Activated CD4-positive, alpha-beta memory T cell treated with anti-CD3 and anti-CD28 coated beads for 36 hours (primary cell): ENCODE measurements at regions of chr11 and their contacts with region 1.

Region 1: GRCh38 chr11:62841361-62842184 is 2.2 kb upstream of the WDR74 start:
- DNase-seq: peak; percentile 88
- H3K4me3 Mint-ChIP-seq: no peak overlapping the region
- H3K27ac Mint-ChIP-seq: no peak overlapping the region
- H3K4me1 Mint-ChIP-seq: peaks cover 17% of the 10 kb centered on the region
- H3K27me3 Mint-ChIP-seq: no peaks in the 10 kb centered on the region

Region 2: GRCh38 chr11:62612366-62613290 is 228.9 kb before region 1 on chr11 and contains the starts of genes EML3 and ROM1:
- CTCF ChIA-PET with region 1: no interaction called
- POLR2A ChIA-PET with region 1: no interaction called
- intact Hi-C with region 1: loop called (anchors 5 kb)
- DNase-seq: peak; percentile 90
- H3K4me3 Mint-ChIP-seq: peak within 1 kb of the TSS; percentile 90
- H3K27ac Mint-ChIP-seq: peak within 1 kb of the TSS; percentile 95
- H3K4me1 Mint-ChIP-seq: peaks cover 45% of the 10 kb centered on the region
- H3K27me3 Mint-ChIP-seq: no peaks in the 10 kb centered on the region
- total RNA-seq, gene EML3: 113 to 116 TPM
- total RNA-seq, gene ROM1: 1.1 to 1.5 TPM

Region 3: DNA sequence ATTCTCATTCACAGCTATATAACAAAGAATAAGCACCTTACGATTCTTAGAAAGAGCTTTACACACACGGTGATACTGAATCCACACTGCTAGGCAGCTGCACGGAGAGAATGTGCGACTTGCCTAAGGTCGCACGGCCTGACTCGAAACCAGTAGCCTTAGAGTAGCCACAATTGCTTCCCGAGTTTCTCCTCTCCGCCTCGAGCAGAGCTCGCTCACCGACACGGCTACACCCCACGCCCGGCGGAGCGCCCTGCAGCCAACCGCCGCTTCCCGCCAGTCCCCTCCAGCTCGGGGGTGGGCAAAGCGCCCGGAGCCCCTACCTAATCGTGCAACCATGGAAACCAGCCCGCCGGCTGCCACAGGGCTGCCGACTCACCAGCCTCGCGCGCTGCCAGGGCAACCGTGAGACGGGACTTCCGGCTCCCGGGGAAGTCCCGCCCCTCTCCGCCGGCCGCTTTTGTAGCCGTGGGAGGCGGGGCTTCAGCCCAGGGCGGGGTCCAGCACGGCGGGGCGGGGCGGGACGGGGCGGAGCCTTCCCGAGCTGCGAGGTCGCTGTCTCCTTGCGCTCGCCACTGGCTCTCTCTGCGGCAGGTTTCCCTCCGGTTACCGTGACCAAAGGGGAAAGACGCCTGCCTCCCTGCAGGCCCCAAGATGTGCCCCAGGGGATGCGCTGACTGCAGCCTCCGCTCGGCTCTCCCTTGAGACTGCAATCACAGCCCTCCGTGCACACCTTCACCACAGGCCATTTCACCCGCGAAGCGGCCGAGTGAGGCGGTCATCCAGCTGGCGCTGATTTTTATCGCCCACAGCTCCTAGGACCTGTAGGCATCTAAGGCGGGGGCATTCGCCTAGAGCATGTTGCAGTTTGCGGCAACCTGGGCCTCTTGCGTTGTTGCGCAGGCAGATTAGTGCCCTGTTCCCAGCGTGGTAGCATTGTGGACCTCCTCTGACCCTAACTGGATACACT is 135.4 kb before region 1 on chr11:
- CTCF ChIA-PET with region 1: no interaction called
- POLR2A ChIA-PET with region 1: interaction called, 29 read pairs
- intact Hi-C with region 1: loop called (anchors 1 kb)
- DNase-seq: peak; percentile 96
- H3K4me3 Mint-ChIP-seq: peak overlapping the region; percentile 85
- H3K27ac Mint-ChIP-seq: peak overlapping the region; percentile 70
- H3K4me1 Mint-ChIP-seq: peaks cover 50% of the 10 kb centered on the region
- H3K27me3 Mint-ChIP-seq: no peaks in the 10 kb centered on the region

Region 4: GRCh38 chr11:62753736-62754603 is 87.6 kb before region 1 on chr11 and contains the start of gene ZBTB3:
- CTCF ChIA-PET with region 1: no interaction called
- POLR2A ChIA-PET with region 1: interaction called, 15 read pairs
- intact Hi-C with region 1: no loop called
- DNase-seq: peak; percentile 98
- H3K4me3 Mint-ChIP-seq: peak within 1 kb of the TSS; percentile 99
- H3K27ac Mint-ChIP-seq: peak within 1 kb of the TSS; percentile 99
- H3K4me1 Mint-ChIP-seq: peaks cover 23% of the 10 kb centered on the region
- H3K27me3 Mint-ChIP-seq: no peaks in the 10 kb centered on the region
- total RNA-seq, gene ZBTB3: 8.4 to 9.7 TPM

Region 5: DNA sequence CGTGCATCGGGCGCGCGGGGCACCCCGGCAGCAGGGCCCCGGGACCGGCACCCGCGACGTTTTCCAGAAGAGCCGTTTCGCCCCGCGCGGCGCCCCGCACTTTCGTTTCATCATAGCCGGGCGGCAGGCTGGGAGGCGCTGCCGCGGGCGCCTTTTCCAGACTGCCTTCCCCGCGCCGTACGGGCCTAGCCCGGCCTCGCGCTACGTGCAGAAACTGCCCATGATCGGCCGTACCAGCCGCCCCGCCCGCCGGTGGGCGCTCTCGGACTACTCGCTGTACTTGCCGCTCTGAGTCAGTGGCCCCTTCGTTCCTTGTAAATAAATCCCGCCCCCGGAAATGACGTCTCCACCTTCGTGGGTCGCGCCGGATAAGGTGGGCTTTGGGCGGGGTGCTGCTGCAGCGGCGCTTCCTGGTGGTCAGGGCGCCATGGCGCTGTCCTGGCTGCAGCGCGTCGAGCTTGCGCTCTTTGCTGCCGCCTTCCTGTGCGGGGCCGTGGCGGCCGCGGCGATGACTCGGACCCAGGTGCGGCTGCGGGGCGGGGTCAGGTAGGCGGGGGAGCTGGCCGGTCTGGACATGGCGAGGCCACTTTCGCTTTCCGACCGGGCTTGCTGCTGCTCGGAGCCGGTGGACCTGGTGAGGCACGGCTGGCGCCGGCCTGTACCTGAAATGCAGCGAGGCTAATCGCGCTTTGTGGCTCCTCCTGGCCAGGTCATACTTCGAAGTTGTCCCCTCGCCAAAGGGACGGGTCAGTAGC is 54.4 kb before region 1 on chr11 and contains the start of gene TMEM179B:
- CTCF ChIA-PET with region 1: interaction called, 32 read pairs
- POLR2A ChIA-PET with region 1: interaction called, 96 read pairs
- intact Hi-C with region 1: loop called (anchors 1 kb)
- DNase-seq: peak; percentile 98
- H3K4me3 Mint-ChIP-seq: peak within 1 kb of the TSS; percentile 95
- H3K27ac Mint-ChIP-seq: peak within 1 kb of the TSS; percentile 93
- H3K4me1 Mint-ChIP-seq: peaks cover 39% of the 10 kb centered on the region
- H3K27me3 Mint-ChIP-seq: no peaks in the 10 kb centered on the region
- total RNA-seq, gene TMEM179B: 25.0 to 25.5 TPM

Region 6: DNA sequence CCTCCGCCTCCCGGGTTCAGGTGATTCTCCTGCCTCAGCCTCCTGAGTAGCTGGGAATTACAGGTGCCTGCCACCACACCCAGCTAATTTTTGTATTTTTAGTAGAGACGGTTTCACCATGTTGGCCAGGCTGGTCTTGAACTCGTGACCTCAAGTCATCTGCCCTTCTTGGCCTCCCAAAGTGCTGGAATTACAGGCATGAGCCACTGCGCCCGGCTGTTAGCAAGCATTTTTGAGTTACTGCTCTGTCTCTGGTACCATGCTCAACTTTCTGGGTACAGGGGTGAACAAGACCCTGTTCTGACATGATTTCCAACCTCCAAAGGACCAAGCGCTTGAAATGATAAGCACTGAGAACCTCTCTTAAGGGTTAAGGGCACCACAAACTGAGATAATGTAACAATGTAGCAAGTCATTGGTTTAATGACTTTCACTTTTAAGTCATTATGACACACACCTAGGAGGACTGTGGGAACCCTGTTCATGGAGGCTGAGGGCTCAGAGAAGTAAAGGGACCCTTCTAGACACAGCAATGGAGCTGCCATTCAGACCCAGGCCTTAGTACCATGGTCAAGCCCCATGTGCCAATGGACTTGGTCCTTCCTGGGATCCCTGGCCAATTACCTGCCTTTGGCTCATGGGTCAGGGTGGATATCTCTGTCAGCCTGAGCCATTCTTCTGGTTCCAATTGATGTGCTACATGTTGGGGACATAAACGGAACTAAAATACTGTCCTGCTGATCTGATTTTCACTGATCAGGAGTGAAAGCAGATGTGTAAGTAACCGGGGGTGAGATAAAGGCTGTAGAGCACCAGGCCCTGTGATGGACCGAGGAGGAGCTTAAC is 50.7 kb after region 1 on chr11:
- CTCF ChIA-PET with region 1: no interaction called
- POLR2A ChIA-PET with region 1: no interaction called
- intact Hi-C with region 1: no loop called
- DNase-seq: no peak
- H3K4me3 Mint-ChIP-seq: no peak overlapping the region
- H3K27ac Mint-ChIP-seq: no peak overlapping the region
- H3K4me1 Mint-ChIP-seq: peaks cover 2% of the 10 kb centered on the region
- H3K27me3 Mint-ChIP-seq: peaks cover 4% of the 10 kb centered on the region

Region 7: GRCh38 chr11:62909107-62909894 is 67.7 kb after region 1 on chr11:
- CTCF ChIA-PET with region 1: no interaction called
- POLR2A ChIA-PET with region 1: no interaction called
- intact Hi-C with region 1: no loop called
- DNase-seq: peak; percentile 31
- H3K4me3 Mint-ChIP-seq: no peak overlapping the region
- H3K27ac Mint-ChIP-seq: no peak overlapping the region
- H3K4me1 Mint-ChIP-seq: peaks cover 5% of the 10 kb centered on the region
- H3K27me3 Mint-ChIP-seq: peaks cover 8% of the 10 kb centered on the region

Region 8: DNA sequence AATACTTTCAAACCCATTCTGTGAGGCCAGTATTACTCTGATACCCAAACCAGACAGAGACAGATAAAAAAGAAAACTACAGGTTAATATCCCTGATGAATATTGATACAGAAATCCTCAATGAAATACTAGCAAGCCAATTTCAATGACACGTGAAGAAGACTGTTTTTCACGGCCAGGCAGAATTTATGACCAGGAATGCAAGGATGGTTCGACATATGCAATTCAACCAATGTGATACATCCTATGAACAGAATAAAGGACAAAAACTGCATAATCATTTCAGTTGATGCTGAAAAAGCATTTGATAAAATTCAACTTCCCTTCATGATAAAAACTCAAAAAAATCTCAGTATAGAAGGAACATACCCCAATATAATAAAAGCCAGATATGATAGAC is 258.0 kb after region 1 on chr11:
- CTCF ChIA-PET with region 1: no interaction called
- POLR2A ChIA-PET with region 1: no interaction called
- intact Hi-C with region 1: no loop called
- DNase-seq: no peak
- H3K4me3 Mint-ChIP-seq: no peak overlapping the region
- H3K27ac Mint-ChIP-seq: no peak overlapping the region
- H3K4me1 Mint-ChIP-seq: no peaks in the 10 kb centered on the region
- H3K27me3 Mint-ChIP-seq: peaks cover 7% of the 10 kb centered on the region